Prostate gland (tissue), 2 donors: ENCODE measurements at regions of chr3 and their contacts with region 1.

Region 1: GRCh38 chr3:66938338-66938963 is 59.7 kb upstream of the KBTBD8 start:
- DNase-seq: peak; percentile 19
- H3K4me3 ChIP-seq: no peak overlapping the region
- H3K27ac ChIP-seq: no peak overlapping the region
- H3K4me1 ChIP-seq: no peaks in the 10 kb centered on the region
- H3K27me3 ChIP-seq: no peaks in the 10 kb centered on the region
- CTCF ChIP-seq: peak in 3 of 4 experiments; percentile 28 to 48 (median 39)
- POLR2A ChIP-seq: no peak

Region 2: GRCh38 chr3:68893600-68894239 is 1955.3 kb after region 1 on chr3:
- intact Hi-C with region 1: loop called (anchors 10 kb)
- DNase-seq: no peak
- H3K4me3 ChIP-seq: no peak overlapping the region
- H3K27ac ChIP-seq: no peak overlapping the region
- H3K4me1 ChIP-seq: no peaks in the 10 kb centered on the region
- H3K27me3 ChIP-seq: no peaks in the 10 kb centered on the region
- CTCF ChIP-seq: peak in 3 of 4 experiments; percentile 42 to 66 (median 48)
- POLR2A ChIP-seq: no peak